Cardiac septum (tissue), 1 donor: ENCODE measurements at regions of chr13 and their contacts with region 1.

Region 1: GRCh38 chr13:28624707-28625432 is 34.1 kb upstream of the POMP start:
- DNase-seq: no peak

Region 2: GRCh38 chr13:28494776-28495537 is 129.9 kb before region 1 on chr13 and contains the start of gene FLT1:
- intact Hi-C with region 1: loop called (anchors 5 kb)
- DNase-seq: peak; percentile 87
- total RNA-seq, gene FLT1: 53.4 TPM